ENCODE measurements at regions of chr13 and their contacts with region 1.

Region 1: DNA sequence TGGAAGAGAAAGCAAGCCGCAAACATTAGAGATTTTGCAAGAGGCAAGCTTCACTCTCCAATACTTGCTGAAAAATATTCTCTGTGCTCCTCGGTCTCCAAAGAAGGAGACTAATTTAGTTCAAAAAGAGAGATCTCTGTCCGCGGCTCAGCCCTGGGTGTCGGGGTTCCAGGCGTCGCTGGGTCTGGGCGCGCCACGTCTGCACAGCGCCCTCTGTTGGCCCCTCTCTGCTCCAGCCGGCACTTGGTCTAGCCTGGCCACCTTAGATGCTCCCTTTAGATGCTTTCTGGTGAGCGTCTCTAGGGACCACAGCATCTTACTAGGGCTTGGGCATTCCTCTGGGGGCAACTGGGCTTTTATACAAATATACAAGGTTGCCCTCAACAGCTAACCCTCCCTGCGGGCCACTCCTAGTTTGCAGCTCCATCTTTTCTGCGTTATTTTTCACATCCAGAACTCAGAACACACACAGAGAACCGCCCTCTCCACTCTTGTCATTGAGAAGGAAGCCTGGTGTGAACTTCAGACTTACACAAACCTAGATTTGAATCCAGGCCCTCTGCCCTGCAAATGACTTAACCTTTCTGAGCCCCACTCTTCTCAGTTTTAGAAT is 78.3 kb downstream of the CYSLTR2 start:
- DNase-seq: peak; percentile 70
- H3K4me3 Mint-ChIP-seq: peak overlapping the region; percentile 50
- H3K27ac Mint-ChIP-seq: no peak overlapping the region
- H3K4me1 Mint-ChIP-seq: peaks cover 18% of the 10 kb centered on the region
- H3K27me3 Mint-ChIP-seq: no peaks in the 10 kb centered on the region

Region 2: DNA sequence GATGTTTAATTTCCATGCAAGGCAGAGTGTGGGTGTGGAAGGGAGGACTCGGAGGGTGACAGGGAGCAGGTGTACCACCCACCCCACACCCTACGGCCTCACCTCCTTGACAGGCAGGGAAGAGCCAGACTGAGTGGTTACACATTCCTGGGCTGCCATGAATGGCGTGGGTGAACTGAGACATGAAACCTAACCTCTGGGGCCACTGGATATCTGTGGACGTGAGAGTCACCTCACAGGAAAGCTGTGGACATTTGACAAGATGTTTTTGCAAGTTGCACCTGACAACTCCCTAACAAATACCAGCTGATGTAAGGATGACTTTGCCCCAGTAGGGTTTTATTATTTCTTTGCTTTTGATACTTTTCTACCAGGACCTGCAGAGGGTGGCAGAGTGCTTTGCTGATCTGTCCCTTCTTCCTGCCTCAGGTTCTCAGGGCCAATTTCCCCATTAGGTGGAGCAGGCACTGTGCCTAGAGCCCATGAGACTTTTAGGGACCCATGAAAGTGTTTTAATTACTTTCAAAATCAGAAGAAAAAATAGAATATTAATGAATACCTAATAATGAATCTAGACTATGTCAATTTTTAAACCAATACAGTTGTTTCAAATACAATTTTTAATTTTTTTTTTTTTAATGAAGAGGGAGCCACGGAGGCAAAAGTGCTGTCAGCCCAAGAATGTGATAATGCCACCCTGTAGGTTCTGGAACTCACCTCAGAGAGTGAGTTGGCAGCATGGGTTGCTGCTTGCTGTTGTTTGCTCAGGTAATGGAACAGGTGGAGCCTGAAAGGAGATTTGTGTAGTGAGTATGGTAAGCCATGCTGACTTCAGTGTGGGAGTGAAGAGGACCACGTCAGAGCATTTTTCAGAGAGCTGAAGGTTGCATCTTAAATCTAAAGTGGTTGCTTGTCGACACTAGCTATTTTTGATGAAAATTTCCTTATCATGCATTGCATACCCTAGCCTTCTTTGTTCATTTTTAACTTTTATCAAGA is 136.3 kb before region 1 on chr13:
- CTCF ChIA-PET with region 1: interaction called, 14 read pairs
- POLR2A ChIA-PET with region 1: no interaction called
- intact Hi-C with region 1: loop called (anchors 1 kb)
- DNase-seq: peak; percentile 67
- H3K4me3 Mint-ChIP-seq: no peak overlapping the region
- H3K27ac Mint-ChIP-seq: no peak overlapping the region
- H3K4me1 Mint-ChIP-seq: peaks cover 2% of the 10 kb centered on the region
- H3K27me3 Mint-ChIP-seq: no peaks in the 10 kb centered on the region

Region 3: GRCh38 chr13:48636550-48636949 is 95.5 kb before region 1 on chr13:
- CTCF ChIA-PET with region 1: no interaction called
- POLR2A ChIA-PET with region 1: no interaction called
- intact Hi-C with region 1: no loop called
- DNase-seq: no peak
- H3K4me3 Mint-ChIP-seq: no peak overlapping the region
- H3K27ac Mint-ChIP-seq: no peak overlapping the region
- H3K4me1 Mint-ChIP-seq: no peaks in the 10 kb centered on the region
- H3K27me3 Mint-ChIP-seq: peaks cover 1% of the 10 kb centered on the region

Region 4: GRCh38 chr13:48653472-48653939 is 78.6 kb before region 1 on chr13 and contains the start of gene CYSLTR2:
- CTCF ChIA-PET with region 1: interaction called, 6 read pairs
- POLR2A ChIA-PET with region 1: no interaction called
- intact Hi-C with region 1: loop called (anchors 5 kb)
- DNase-seq: peak; percentile 16
- H3K4me3 Mint-ChIP-seq: peak within 1 kb of the TSS; percentile 75
- H3K27ac Mint-ChIP-seq: peak within 1 kb of the TSS; percentile 81
- H3K4me1 Mint-ChIP-seq: peaks cover 33% of the 10 kb centered on the region
- H3K27me3 Mint-ChIP-seq: no peaks in the 10 kb centered on the region
- total RNA-seq, gene CYSLTR2: 2.1 to 2.4 TPM

Region 5: GRCh38 chr13:48709213-48709612 is 22.9 kb before region 1 on chr13:
- CTCF ChIA-PET with region 1: interaction called, 11 read pairs
- POLR2A ChIA-PET with region 1: no interaction called
- intact Hi-C with region 1: no loop called
- DNase-seq: no peak
- H3K4me3 Mint-ChIP-seq: no peak overlapping the region
- H3K27ac Mint-ChIP-seq: no peak overlapping the region
- H3K4me1 Mint-ChIP-seq: peaks cover 16% of the 10 kb centered on the region
- H3K27me3 Mint-ChIP-seq: no peaks in the 10 kb centered on the region

Region 6: GRCh38 chr13:48749699-48750473 is 17.8 kb after region 1 on chr13:
- CTCF ChIA-PET with region 1: interaction called, 10 read pairs
- POLR2A ChIA-PET with region 1: no interaction called
- intact Hi-C with region 1: no loop called
- DNase-seq: peak; percentile 89
- H3K4me3 Mint-ChIP-seq: peak overlapping the region; percentile 0
- H3K27ac Mint-ChIP-seq: peak overlapping the region; percentile 16
- H3K4me1 Mint-ChIP-seq: peaks cover 19% of the 10 kb centered on the region
- H3K27me3 Mint-ChIP-seq: no peaks in the 10 kb centered on the region